Left lung (tissue), 14 donors: ENCODE measurements at regions of chr17 and their contacts with region 1.

Region 1: GRCh38 chr17:73255671-73256181 is 6.0 kb downstream of the CPSF4L start:
- DNase-seq: peak in 3 of 4 donors; percentile 42 to 58 (median 54)
- ATAC-seq: peak; percentile 84
- H3K4me3 ChIP-seq: no peak overlapping the region
- H3K27ac ChIP-seq: no peak overlapping the region
- H3K4me1 ChIP-seq: peaks cover 0 to 3% of the 10 kb centered on the region in 2 donors
- H3K27me3 ChIP-seq: no peaks in the 10 kb centered on the region
- CTCF ChIP-seq: peak; percentile 94 to 96

Region 2: GRCh38 chr17:73359987-73360410 is 104.3 kb after region 1 on chr17:
- intact Hi-C with region 1: loop called in 1 of 2 experiments (anchors 10 kb)
- DNase-seq: peak in 3 of 4 donors; percentile 55 to 87 (median 76)
- ATAC-seq: peak; percentile 93
- H3K4me3 ChIP-seq: no peak overlapping the region
- H3K27ac ChIP-seq: no peak overlapping the region
- H3K4me1 ChIP-seq: peaks cover 0 to 4% of the 10 kb centered on the region in 2 donors
- H3K27me3 ChIP-seq: no peaks in the 10 kb centered on the region
- CTCF ChIP-seq: no peak

Region 3: GRCh38 chr17:73369111-73369521 is 113.4 kb after region 1 on chr17:
- intact Hi-C with region 1: loop called (anchors 2 to 10 kb)
- DNase-seq: peak in 2 of 4 donors; percentile 59 to 62
- ATAC-seq: no peak
- H3K4me3 ChIP-seq: no peak overlapping the region
- H3K27ac ChIP-seq: no peak overlapping the region
- H3K4me1 ChIP-seq: no peaks in the 10 kb centered on the region
- H3K27me3 ChIP-seq: no peaks in the 10 kb centered on the region
- CTCF ChIP-seq: no peak